ENCODE measurements at regions of chr5 and their contacts with region 1.

Region 1: DNA sequence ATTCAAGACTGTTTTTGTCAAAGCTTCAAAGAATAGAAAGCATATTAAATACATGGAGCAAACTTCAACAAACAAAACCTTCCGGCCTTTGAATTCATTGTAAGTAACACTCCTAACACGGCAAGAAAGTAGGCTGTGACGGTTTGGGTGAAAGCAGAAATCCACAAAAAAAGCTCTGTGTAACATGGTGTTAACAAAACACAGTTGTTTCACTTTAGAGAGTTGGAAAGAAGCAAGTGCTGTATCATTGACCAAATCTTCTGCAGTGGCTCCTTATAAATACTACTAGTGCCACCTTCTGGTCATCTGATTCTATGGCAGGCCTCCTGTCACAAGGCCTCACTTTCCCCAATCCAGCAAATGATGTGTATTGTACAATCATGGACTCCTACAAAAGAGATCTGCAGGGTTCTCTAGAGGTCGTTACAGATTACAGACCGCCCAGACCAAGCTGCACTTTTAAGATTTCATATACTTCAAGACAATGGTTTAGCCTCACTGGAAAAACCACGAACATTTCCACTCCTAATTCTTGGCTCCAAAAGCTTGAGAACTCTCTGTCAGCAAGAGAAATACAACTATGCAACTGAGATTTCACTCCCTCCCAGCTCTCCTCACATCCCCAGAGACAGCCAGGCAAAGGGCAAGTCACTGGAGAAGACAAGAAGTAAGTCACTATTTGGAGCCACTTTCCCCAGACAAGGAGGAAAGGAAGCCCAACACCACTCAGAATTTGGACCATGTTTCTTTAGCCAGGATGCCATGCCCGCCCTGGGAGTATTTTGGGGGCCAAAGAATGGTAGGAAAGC is 196.2 kb downstream of the DTWD2 start:
- DNase-seq: peak; percentile 22
- ATAC-seq: peak; percentile 62
- H3K4me3 Mint-ChIP-seq: no peak overlapping the region
- H3K27ac Mint-ChIP-seq: peak overlapping the region; percentile 28; the same call in 1 of the 2 replicates
- H3K4me1 Mint-ChIP-seq: peaks cover 58% of the 10 kb centered on the region
- H3K27me3 Mint-ChIP-seq: no peaks in the 10 kb centered on the region
- CTCF ChIP-seq: peak; percentile 50

Region 2: GRCh38 chr5:118698774-118699173 is 93.4 kb before region 1 on chr5:
- CTCF ChIA-PET with region 1: interaction called, 16 read pairs
- POLR2A ChIA-PET with region 1: no interaction called
- DNase-seq: peak; percentile 53
- ATAC-seq: peak; percentile 99
- H3K4me3 Mint-ChIP-seq: no peak overlapping the region
- H3K27ac Mint-ChIP-seq: no peak overlapping the region
- H3K4me1 Mint-ChIP-seq: peaks cover 2% of the 10 kb centered on the region; the same call in 1 of the 2 replicates
- H3K27me3 Mint-ChIP-seq: no peaks in the 10 kb centered on the region
- CTCF ChIP-seq: no peak

Region 3: GRCh38 chr5:118726891-118727290 is 65.2 kb before region 1 on chr5:
- CTCF ChIA-PET with region 1: no interaction called
- POLR2A ChIA-PET with region 1: no interaction called
- DNase-seq: no peak
- ATAC-seq: no peak
- H3K4me3 Mint-ChIP-seq: no peak overlapping the region
- H3K27ac Mint-ChIP-seq: peak overlapping the region; percentile 8; the same call in 1 of the 2 replicates
- H3K4me1 Mint-ChIP-seq: peaks cover 24% of the 10 kb centered on the region
- H3K27me3 Mint-ChIP-seq: no peaks in the 10 kb centered on the region
- CTCF ChIP-seq: no peak

Region 4: DNA sequence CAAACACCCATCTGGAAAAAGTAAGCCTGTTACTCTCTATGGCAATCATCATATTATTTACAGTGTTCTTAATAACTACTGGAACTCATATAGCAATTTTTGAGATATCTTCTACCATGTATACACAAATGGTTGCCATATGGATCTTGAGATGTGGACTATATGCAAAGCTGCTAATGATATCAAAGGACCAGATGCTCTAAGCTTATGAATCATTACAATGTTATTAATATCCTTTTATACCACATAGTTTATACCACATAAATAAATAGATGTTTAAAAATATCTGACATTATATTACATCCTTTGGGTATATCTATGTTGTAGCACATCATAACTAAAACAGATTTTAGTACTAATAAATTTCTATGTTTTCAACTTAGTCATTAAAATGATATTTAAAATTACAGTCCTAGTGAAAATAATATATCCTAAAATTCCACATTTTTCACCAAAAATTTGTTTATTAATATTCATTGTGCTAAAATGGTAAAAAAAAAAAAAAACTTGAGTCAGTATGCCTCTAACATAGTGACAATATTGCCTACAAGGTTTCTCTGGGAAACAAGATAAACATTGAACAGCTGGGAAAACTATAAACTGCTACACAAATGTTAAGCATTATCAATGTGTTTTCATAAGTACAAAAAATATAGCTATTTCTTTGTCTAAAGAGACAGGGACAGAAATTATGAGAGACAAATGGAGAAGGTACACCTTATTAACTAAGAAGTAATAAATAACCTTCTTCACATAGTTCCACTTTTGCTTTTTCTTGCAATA is 110.7 kb after region 1 on chr5:
- CTCF ChIA-PET with region 1: no interaction called
- POLR2A ChIA-PET with region 1: no interaction called
- DNase-seq: no peak
- ATAC-seq: no peak
- H3K4me3 Mint-ChIP-seq: no peak overlapping the region
- H3K27ac Mint-ChIP-seq: no peak overlapping the region
- H3K4me1 Mint-ChIP-seq: peaks cover 20% of the 10 kb centered on the region
- H3K27me3 Mint-ChIP-seq: no peaks in the 10 kb centered on the region
- CTCF ChIP-seq: no peak

Measured in WTC11 (cell line).